Calu3 (cell line): ENCODE measurements at regions of chr11 and their contacts with region 1.

Region 1: GRCh38 chr11:43895601-43896000 is 15.0 kb downstream of the ALKBH3 start:
- DNase-seq: no peak
- H3K4me3 Mint-ChIP-seq: no peak overlapping the region
- H3K27ac Mint-ChIP-seq: no peak overlapping the region
- H3K4me1 Mint-ChIP-seq: no peaks in the 10 kb centered on the region
- H3K27me3 Mint-ChIP-seq: no peaks in the 10 kb centered on the region
- CTCF ChIP-seq: no peak

Region 2: DNA sequence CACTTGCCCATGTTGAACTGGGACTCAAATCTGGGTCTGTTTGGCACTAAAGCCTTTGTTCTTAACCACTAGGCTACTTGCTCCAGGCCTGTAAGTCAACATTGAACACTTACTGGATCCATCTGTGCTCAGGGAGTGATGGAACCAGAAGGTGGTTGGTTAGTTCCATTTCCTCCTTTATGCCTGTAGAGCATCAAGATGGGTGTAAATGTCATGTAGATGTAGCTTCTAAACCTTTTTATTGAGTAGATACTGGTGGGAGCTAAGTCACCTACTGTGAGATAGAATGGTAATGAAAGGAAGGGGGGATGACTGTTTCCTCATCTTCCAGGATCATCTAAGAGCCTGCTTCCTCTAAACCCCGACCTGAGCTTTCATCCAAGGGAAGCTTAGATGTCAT is 53.6 kb before region 1 on chr11:
- CTCF ChIA-PET with region 1: no interaction called
- intact Hi-C with region 1: no loop called
- DNase-seq: no peak
- H3K4me3 Mint-ChIP-seq: no peak overlapping the region
- H3K27ac Mint-ChIP-seq: no peak overlapping the region
- H3K4me1 Mint-ChIP-seq: no peaks in the 10 kb centered on the region
- H3K27me3 Mint-ChIP-seq: no peaks in the 10 kb centered on the region
- CTCF ChIP-seq: no peak

Region 3: DNA sequence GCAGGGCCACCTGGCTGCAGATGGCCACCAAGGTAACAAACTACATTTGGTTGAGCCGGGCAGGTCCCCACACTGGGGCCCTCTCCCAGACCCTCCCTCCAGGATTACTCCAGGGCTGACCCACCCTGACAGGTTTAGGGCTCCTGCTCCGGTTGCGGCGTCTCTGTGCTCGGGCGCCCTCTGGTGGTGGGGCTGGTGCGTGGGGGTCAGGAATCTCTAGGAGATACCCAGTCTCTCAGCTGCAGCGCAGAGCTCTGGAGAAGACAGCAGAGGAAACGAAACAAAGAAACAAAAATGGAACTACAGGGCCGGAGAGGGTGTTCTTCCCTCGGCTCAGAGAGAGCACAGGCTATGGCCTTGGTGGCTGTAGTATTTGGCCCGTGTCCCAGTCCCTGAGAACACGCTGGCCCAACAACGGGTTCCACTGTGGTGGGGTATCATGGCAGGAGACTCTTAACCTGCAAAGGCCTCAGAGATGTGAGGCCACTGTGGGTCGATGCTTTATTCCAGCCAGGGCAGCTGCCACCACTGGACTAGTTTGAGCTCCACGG is 49.2 kb after region 1 on chr11:
- CTCF ChIA-PET with region 1: interaction called, 17 read pairs
- intact Hi-C with region 1: loop called (anchors 1 kb)
- DNase-seq: peak; percentile 90
- H3K4me3 Mint-ChIP-seq: peak overlapping the region; percentile 59
- H3K27ac Mint-ChIP-seq: no peak overlapping the region
- H3K4me1 Mint-ChIP-seq: peaks cover 28% of the 10 kb centered on the region
- H3K27me3 Mint-ChIP-seq: peaks cover 81% of the 10 kb centered on the region
- CTCF ChIP-seq: peak; percentile 96

Region 4: GRCh38 chr11:44036811-44037657 is 141.4 kb after region 1 on chr11:
- CTCF ChIA-PET with region 1: interaction called, 3 read pairs
- intact Hi-C with region 1: loop called (anchors 1 kb)
- DNase-seq: peak; percentile 69
- H3K4me3 Mint-ChIP-seq: no peak overlapping the region
- H3K27ac Mint-ChIP-seq: no peak overlapping the region
- H3K4me1 Mint-ChIP-seq: no peaks in the 10 kb centered on the region
- H3K27me3 Mint-ChIP-seq: peaks cover 69% of the 10 kb centered on the region
- CTCF ChIP-seq: peak; percentile 69

Region 5: DNA sequence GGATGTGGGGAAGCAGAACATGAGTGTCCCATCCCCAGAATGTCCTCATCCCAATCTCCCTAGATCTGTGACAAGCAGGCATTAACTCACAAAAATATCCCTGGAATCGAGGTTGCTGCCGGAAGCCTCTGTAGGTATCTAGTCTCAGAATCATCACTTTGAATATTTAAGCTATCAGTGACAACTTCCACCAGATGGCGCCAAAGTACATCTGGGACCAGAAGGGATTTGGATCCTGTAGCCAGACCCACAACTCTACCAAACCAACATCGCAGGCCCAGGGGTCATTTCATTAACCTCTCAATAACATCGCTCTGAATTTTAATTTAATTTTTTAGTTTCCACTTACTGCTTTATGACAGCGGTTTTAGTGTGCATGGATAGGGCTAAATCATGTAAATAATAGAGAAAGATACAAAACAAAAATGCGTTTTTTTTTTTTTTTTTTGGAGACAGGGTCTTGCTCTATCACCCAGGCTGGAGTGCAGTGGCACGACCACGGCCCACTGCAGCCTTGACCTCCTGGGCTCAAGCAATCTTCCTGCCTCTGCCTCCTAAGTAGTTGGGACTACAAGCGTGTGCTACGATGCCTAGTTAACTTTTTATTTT is 198.8 kb after region 1 on chr11:
- CTCF ChIA-PET with region 1: no interaction called
- intact Hi-C with region 1: loop called (anchors 5 kb)
- DNase-seq: peak; percentile 75
- H3K4me3 Mint-ChIP-seq: no peak overlapping the region
- H3K27ac Mint-ChIP-seq: no peak overlapping the region
- H3K4me1 Mint-ChIP-seq: peaks cover 16% of the 10 kb centered on the region
- H3K27me3 Mint-ChIP-seq: no peaks in the 10 kb centered on the region
- CTCF ChIP-seq: peak; percentile 50

Region 6: DNA sequence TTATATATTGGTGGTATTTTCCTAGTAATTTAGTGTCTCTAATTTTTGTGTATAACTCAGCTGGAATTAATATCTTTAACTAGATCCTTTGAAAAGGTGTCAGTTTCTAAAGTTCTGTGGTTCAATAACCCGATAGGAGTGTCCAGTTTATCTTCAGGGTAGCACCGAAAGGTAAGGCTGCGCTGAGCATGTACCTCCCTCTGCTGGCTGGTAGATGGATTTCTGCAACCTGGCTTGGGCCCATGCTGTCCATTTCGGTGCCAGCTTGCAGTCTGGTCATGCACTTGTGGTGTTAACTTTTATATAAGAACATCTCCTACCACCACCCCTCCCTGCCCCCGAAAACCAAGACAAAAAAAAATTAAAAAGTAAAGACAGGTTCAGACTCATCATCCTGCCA is 224.6 kb after region 1 on chr11:
- CTCF ChIA-PET with region 1: no interaction called
- intact Hi-C with region 1: no loop called
- DNase-seq: no peak
- H3K4me3 Mint-ChIP-seq: no peak overlapping the region
- H3K27ac Mint-ChIP-seq: no peak overlapping the region
- H3K4me1 Mint-ChIP-seq: no peaks in the 10 kb centered on the region
- H3K27me3 Mint-ChIP-seq: no peaks in the 10 kb centered on the region
- CTCF ChIP-seq: no peak